CD8-positive, alpha-beta T cell (primary cell): ENCODE measurements at regions of chr17 and their contacts with region 1.

Region 1: DNA sequence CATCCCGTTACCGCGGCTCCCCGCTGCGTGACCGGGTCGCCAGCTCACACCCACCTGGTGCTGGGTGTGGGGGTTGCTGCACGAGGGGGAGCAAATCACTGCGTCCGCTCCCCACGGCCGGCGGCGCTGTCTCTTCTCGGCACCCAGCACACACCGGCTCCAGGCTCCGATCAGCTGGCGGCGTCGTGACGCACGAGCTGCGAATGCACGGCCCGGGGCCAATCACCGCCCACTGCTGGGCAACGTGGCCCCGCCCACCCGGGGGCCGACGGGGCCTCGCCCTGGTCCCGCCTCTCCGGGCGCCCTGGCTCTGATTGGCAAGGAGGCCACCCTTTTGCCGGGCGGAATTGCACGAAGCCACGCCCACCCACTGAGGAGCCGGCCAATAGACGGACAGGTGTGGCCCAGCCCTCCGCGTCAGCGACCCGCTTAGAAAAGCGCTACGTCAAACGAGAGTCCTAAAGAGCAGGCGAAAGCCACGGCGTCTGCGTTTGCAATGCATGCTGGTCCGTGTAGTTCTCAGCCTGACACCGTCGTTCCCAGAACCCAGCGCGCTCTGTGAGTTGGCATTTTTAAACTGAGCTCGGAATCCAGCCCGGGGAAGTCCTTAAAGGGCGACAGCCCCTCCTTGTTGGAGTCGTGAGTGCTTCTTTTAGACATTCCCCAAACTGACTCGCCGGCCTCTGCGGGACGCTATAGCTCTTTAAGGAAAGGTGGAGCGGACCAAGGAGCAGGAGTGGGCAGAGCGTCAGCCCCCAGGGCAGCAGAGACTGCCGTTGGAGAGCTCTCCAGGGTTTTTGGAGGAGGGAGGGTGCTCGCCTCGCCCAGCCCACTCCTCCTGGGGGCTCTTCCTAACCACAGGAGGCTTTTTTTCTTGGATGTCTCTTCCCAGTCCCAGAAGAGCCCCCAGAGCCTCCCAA is 6.2 kb upstream of the TLCD2 start:
- DNase-seq: peak; percentile 100
- ATAC-seq: peak; percentile 90
- H3K4me3 ChIP-seq: peak overlapping the region; percentile 72 to 78
- H3K4me3 Mint-ChIP-seq: peak overlapping the region; percentile 94
- H3K27ac ChIP-seq: peak overlapping the region; percentile 65 to 88
- H3K27ac Mint-ChIP-seq: peak overlapping the region; percentile 90
- H3K4me1 ChIP-seq: peaks cover 26% of the 10 kb centered on the region
- H3K4me1 Mint-ChIP-seq: peaks cover 26% of the 10 kb centered on the region
- H3K27me3 ChIP-seq: peaks cover 3 to 4% of the 10 kb centered on the region in 2 experiments
- H3K27me3 Mint-ChIP-seq: peaks cover 2% of the 10 kb centered on the region
- CTCF ChIP-seq: no peak

Region 2: DNA sequence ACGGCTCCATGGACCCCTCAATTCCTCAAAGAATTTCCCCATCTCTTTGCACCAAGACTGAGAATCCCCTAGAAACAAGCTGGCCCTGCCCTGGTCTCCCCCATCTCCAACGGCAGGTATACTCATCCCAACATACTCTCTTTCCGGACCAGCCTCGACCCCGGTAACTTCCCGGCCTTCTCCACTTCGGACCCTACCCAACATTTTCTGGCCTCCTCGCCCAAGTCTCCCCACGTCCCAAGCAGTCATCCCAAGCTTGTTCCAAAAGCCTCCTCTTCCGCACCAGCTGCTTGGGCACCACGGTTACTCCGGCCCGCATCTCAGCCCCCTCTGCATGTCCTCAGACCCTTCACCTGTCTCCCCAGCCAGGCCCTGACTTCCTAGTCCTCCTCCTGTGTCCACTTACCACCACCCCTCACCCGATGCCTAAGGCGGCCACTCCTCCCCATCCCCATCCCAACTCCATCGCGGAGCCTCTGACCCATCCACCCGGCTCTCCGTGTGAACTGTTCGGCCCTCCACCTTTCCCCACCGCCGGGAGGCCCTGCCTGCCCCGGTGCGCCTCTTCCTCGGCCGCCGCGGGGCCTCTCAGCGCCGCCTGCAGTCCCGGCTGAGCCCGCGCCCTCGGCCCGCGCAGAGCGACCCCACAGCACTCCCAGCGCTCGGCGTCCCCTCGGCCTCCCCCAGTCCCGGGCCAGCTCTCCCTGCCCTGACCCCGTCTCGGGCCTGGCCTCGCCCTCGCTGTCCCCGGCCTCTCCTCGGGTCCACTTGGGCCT is 154.7 kb before region 1 on chr17:
- CTCF ChIA-PET with region 1: no interaction called
- POLR2A ChIA-PET with region 1: no interaction called
- intact Hi-C with region 1: loop called (anchors 2 to 5 kb)
- DNase-seq: peak in 8 of 9 experiments; percentile 16 to 62 (median 34)
- ATAC-seq: peak; percentile 35
- H3K4me3 ChIP-seq: peak overlapping the region; percentile 40 to 41
- H3K4me3 Mint-ChIP-seq: peak overlapping the region; percentile 83
- H3K27ac ChIP-seq: peak overlapping the region in 1 of 2 experiments; percentile 40
- H3K27ac Mint-ChIP-seq: peak overlapping the region; percentile 66
- H3K4me1 ChIP-seq: peaks cover 19% of the 10 kb centered on the region
- H3K4me1 Mint-ChIP-seq: peaks cover 45% of the 10 kb centered on the region
- H3K27me3 ChIP-seq: no peaks in the 10 kb centered on the region
- H3K27me3 Mint-ChIP-seq: no peaks in the 10 kb centered on the region
- CTCF ChIP-seq: peak; percentile 38

Region 3: GRCh38 chr17:1648963-1649843 is 67.1 kb before region 1 on chr17:
- CTCF ChIA-PET with region 1: interaction called, 4 read pairs
- POLR2A ChIA-PET with region 1: interaction called, 12 read pairs
- intact Hi-C with region 1: loop called (anchors 1 to 2 kb)
- DNase-seq: peak; percentile 90 to 98 (median 93)
- ATAC-seq: peak; percentile 76
- H3K4me3 ChIP-seq: peak overlapping the region; percentile 34 to 70
- H3K4me3 Mint-ChIP-seq: peak overlapping the region; percentile 74
- H3K27ac ChIP-seq: peak overlapping the region in 1 of 2 experiments; percentile 44
- H3K27ac Mint-ChIP-seq: peak overlapping the region; percentile 49
- H3K4me1 ChIP-seq: peaks cover 16% of the 10 kb centered on the region
- H3K4me1 Mint-ChIP-seq: peaks cover 14% of the 10 kb centered on the region
- H3K27me3 ChIP-seq: no peaks in the 10 kb centered on the region
- H3K27me3 Mint-ChIP-seq: no peaks in the 10 kb centered on the region
- CTCF ChIP-seq: peak; percentile 71

Region 4: DNA sequence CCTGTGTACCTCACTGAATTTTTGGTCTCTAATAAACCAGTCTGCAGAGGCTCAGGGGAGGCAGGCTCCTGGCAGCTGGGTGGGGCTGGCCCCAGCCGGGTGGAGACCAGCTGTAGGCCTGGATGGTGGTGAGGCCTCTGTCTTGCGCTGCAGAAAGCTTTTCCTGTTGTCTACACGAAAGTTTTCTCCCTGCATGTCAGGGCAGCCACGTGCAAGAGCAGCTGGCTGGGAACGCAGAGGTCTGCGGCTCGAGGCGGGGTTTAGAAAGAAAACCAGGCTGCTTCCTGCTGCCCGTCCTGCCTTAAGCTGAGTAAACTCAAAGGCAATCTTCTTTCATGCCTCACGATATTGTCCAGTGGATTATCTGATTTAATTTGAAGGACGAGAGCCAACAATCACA is 47.9 kb after region 1 on chr17:
- CTCF ChIA-PET with region 1: interaction called, 39 read pairs
- POLR2A ChIA-PET with region 1: interaction called, 17 read pairs
- intact Hi-C with region 1: loop called in 1 of 2 experiments (anchors 5 kb)
- DNase-seq: peak; percentile 33 to 89 (median 70)
- ATAC-seq: peak; percentile 94
- H3K4me3 ChIP-seq: no peak overlapping the region
- H3K4me3 Mint-ChIP-seq: peak overlapping the region; percentile 67
- H3K27ac ChIP-seq: peak overlapping the region; percentile 11 to 53
- H3K27ac Mint-ChIP-seq: peak overlapping the region; percentile 96
- H3K4me1 ChIP-seq: peaks cover 44% of the 10 kb centered on the region
- H3K4me1 Mint-ChIP-seq: peaks cover 48% of the 10 kb centered on the region
- H3K27me3 ChIP-seq: no peaks in the 10 kb centered on the region
- H3K27me3 Mint-ChIP-seq: no peaks in the 10 kb centered on the region
- CTCF ChIP-seq: no peak

Region 5: DNA sequence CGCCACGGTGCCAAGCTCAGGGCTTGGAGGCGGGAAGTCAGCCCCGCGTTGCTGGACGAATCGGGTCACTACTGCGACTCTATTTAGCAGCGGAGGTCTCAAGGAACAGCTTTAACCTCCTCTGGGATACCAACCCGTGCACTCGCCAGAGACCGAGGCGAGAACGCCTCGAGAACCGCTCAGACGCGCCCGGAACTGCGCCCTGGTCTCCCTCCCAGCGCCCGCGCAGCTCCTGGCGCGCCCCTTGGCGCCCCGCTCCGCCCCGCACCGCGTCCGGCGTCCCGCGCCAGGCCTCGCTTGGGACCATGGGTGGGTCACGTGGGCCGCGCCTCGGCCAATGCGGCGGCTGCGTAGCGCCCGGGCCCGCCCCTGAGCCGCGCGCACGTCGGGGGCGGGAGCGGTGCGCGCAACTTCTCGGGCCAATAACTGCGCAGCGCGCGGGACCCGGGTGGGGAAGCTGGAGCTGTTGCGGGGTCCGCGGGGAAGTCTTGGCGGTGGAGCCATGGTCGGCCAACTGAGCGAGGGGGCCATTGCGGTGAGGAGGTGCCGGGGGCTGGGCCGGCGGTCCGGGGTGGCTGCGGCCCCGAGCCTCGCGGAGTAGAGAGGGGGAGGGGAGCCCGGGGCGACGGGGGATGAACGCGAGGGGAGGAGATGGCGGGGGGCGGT is 113.4 kb after region 1 on chr17 and contains the starts of genes RPA1 and SMYD4:
- CTCF ChIA-PET with region 1: interaction called, 12 read pairs
- POLR2A ChIA-PET with region 1: interaction called, 7 read pairs
- intact Hi-C with region 1: loop called (anchors 1 kb)
- DNase-seq: peak; percentile 74 to 95 (median 86)
- ATAC-seq: peak; percentile 96
- H3K4me3 ChIP-seq: peak within 1 kb of the TSS; percentile 81 to 82
- H3K4me3 Mint-ChIP-seq: peak within 1 kb of the TSS; percentile 94
- H3K27ac ChIP-seq: peak within 1 kb of the TSS; percentile 74 to 77
- H3K27ac Mint-ChIP-seq: peak within 1 kb of the TSS; percentile 92
- H3K4me1 ChIP-seq: peaks cover 24% of the 10 kb centered on the region
- H3K4me1 Mint-ChIP-seq: peaks cover 59% of the 10 kb centered on the region
- H3K27me3 ChIP-seq: no peaks in the 10 kb centered on the region
- H3K27me3 Mint-ChIP-seq: no peaks in the 10 kb centered on the region
- CTCF ChIP-seq: no peak
- total RNA-seq, gene RPA1: 35.1 to 38.1 TPM
- total RNA-seq, gene SMYD4: 8.9 to 10.1 TPM

Region 6: DNA sequence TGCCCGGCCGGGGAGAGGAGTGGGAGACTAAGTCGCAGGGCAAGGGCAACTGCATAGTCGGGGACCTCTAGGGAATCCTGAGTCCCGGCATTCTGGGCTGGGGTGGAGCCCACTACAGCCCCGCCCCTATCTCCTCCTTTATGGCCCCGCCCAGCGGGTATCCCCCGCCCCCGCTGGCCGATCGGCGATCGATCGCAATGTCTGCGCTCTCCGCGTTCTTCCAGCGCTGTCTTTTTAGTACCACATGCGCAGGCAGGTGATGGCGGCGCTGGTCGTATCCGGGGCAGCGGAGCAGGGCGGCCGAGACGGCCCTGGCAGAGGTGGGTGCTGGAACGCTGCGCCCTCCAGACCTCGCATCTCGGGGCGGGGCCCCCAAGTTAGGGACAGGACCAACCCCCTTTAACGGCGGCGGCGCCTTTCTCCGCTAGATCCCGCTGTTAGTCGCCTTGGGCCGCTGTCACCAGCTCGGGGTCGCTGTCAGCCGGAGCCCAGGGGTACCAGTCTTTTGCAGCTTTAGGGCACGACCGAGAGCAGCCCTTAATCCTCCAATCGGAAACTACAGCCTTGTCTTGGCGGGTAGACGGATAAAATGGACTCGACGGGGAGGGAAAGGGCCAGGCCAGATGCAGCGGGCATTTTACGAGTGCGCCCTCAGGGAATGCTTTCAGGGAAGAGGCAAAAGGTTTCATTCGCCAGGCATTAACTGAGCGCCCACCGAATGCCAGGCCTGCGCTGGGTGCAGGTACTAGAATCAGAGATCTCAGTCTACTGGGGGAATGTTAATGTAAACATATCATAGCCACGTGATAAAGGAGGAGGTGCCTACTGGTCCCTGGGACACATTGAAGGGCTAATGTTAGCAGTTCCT is 313.8 kb after region 1 on chr17 and contains the start of gene DPH1:
- CTCF ChIA-PET with region 1: no interaction called
- POLR2A ChIA-PET with region 1: no interaction called
- intact Hi-C with region 1: loop called (anchors 2 kb)
- DNase-seq: peak; percentile 66 to 92 (median 85)
- ATAC-seq: peak; percentile 81
- H3K4me3 ChIP-seq: peak within 1 kb of the TSS; percentile 93 to 100
- H3K4me3 Mint-ChIP-seq: peak within 1 kb of the TSS; percentile 97
- H3K27ac ChIP-seq: peak within 1 kb of the TSS; percentile 73 to 81
- H3K27ac Mint-ChIP-seq: peak within 1 kb of the TSS; percentile 86
- H3K4me1 ChIP-seq: peaks cover 34% of the 10 kb centered on the region
- H3K4me1 Mint-ChIP-seq: peaks cover 34% of the 10 kb centered on the region
- H3K27me3 ChIP-seq: peaks cover 0 to 18% of the 10 kb centered on the region in 2 experiments
- H3K27me3 Mint-ChIP-seq: peaks cover 12% of the 10 kb centered on the region
- CTCF ChIP-seq: no peak
- total RNA-seq, gene DPH1: 128 to 149 TPM